GM10248 (cell line): ENCODE measurements at regions of chr10 and their contacts with region 1.

Region 1: DNA sequence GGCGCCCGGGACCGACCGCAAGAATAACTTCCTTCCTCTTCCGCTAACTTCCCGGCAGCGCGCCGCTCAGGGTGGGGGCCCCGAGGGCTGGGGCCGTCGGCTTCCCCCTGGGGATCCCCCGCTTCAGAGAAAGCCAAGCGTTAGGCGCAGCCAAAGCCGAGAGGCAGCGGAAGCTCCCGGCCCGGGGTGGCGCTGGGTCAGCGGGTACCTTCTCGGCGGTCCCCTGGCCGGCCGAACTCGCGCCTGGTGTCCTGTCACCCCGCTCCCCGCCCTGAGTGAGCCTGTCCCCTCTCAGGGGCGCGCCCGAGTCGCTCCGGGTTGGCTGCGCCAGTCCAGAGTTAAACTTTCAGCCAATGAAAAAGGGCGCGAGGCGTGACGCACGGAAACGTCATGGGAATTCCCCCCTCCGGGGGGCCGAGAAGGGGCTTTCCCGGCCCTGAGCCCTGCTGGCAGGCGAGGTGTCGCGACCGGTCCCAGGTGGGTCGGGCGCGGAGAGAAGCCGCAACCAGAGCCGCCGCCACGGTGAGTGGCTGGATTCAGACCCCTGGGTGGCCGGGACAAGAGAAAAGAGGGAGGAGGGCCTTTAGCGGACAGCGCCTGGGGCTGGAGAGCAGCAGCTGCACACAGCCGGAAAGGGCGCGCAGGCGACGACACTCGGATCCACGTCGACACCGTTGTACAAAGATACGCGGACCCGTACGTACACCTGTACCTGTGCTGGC is 1.3 kb upstream of the NFKB2 start:
- DNase-seq: peak; percentile 98
- CTCF ChIP-seq: no peak

Region 2: DNA sequence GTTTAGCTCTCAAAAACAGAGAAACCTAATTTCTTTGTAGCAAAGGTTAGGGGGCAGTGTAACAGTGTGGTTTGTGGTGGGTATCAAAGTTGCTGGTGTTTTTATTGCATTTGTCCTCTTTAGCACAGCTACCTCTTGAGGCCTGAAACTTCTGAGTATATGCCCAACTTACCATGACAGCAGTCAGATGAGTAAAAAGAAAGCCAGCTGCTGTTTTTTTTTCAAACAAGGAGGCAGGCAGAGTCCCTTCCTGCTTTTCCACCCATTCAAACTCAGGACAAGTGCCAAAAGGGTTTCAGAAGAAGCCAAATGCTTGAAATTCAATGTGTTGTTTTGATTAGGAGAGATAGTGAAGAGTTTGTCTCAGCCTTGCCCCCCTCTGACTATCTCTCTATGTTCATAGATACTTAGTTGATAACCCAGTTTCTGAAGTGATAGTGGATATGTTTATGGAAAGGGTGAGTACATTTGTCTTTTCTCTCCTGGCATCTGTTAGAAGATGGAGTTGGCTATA is 125.8 kb before region 1 on chr10:
- CTCF ChIA-PET with region 1: interaction called, 10 read pairs
- POLR2A ChIA-PET with region 1: no interaction called
- DNase-seq: no peak
- CTCF ChIP-seq: no peak

Region 3: GRCh38 chr10:102375250-102375649 is 19.0 kb before region 1 on chr10:
- CTCF ChIA-PET with region 1: interaction called, 13 read pairs
- POLR2A ChIA-PET with region 1: no interaction called
- DNase-seq: no peak
- CTCF ChIP-seq: no peak

Region 4: DNA sequence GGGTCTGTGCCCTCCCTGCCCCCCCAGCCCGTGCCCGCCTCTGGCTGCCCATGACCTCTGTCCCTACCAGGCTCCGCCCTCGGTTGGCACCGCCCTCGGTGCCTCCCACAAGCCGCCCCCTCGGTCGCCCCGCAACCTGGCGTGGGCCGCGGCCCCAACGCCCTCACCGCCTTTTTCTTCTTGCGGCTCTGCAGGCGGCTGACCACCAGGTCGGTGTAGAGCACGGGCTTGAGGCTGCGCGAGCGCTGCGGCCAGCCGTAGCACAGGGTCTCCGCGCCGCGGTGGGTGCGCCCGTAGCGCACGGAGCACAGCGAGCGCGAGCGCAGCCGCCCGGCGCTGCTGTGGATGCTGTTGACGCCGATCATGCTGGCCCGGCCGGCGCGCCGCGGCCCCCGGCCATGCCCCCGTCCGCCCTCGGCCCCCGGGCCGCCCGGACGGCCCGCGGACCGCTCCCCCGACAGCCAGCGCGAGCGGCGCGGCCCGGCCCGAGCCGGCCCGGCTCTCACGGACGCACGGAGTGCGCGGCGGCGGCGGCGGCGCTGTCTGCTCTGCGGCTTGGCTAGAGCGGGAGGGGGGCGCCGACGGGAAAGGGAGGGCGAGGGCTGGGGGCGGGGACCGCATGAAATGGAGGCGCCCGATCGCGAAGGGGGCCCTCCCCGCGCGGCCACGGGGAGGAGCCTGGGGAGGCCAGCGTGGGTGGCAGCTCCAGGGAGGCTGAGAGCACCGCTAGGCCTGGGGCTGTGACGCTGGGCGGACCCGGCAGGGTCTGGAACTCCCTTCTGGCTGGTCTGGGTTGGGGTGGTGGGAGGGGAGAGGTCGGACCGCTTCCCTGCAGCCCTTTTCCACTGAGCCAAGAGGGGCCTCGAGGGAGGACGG is 14.7 kb after region 1 on chr10:
- CTCF ChIA-PET with region 1: interaction called, 61 read pairs
- POLR2A ChIA-PET with region 1: no interaction called
- DNase-seq: peak; percentile 75
- CTCF ChIP-seq: no peak

Region 5: GRCh38 chr10:102484021-102484420 is 89.8 kb after region 1 on chr10:
- CTCF ChIA-PET with region 1: interaction called, 22 read pairs
- POLR2A ChIA-PET with region 1: interaction called, 3 read pairs
- DNase-seq: peak; percentile 4
- CTCF ChIP-seq: no peak